CD14-positive monocyte (primary cell): ENCODE measurements at regions of chr22 and their contacts with region 1.

Region 1: GRCh38 chr22:38569972-38570778 is at the start of gene DMC1:
- DNase-seq: peak; percentile 35 to 54 (median 43)
- H3K4me3 ChIP-seq: peak within 1 kb of the TSS; percentile 1 to 72 (median 30)
- H3K4me3 Mint-ChIP-seq: peak within 1 kb of the TSS; percentile 77 to 93
- H3K27ac ChIP-seq: no peak within 1 kb of the TSS
- H3K27ac Mint-ChIP-seq: peak within 1 kb of the TSS in 4 of 7 donors; percentile 20 to 80 (median 46)
- H3K4me1 ChIP-seq: peaks cover 25 to 39% of the 10 kb centered on the region in 2 donors
- H3K4me1 Mint-ChIP-seq: peaks cover 37% of the 10 kb centered on the region
- H3K27me3 ChIP-seq: peaks cover 56 to 71% of the 10 kb centered on the region in 2 donors
- H3K27me3 Mint-ChIP-seq: peaks cover 66 to 77% (median 74%) of the 10 kb centered on the region in 3 donors
- CTCF ChIP-seq: no peak
- polyA plus RNA-seq, gene DMC1: not detected

Region 2: DNA sequence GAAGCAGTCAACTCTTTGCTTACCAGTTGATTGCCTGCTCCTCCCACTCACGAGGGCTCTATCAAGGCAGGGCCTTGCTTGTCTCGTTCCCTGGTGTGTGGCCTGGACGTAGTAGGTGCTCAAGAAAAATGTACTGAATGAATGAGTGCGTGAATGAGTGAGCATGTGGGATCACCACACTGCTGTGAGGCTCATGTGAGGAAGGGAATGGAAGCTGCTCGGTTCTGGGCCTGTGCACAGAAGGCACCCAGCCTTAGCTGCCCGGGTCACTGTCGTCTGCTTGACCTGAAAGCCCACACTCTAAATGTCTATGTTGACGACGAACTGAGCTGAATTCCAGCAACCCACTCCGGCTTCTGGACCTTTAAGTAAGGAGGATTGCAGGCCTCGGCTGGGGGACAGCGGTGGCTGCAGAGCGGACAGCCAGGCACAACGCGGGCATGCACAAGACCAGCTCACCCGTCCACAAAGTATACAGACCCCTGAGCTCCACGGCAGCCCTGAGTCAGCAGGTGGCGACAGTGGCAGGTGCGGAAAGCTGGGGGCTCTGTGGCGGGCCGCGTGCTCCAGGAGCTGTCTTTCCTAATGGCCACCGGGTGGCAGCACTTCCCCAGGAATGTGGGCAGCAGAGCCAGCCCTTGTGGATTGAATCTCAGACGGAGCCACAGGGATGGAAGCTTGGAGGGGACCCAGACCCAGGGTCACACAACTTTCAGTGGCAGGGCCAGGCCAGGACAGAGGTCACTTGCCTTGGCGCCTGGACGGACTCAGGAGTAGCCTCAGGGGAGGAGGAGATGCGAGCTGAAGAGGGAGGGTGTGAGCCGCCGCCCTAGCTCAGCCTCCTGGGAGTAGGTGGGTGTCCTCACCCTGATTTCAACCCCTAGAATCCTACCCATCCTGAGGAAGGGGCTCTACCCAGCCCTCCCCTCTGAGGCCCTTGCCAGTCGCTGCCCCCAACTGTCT is 518.0 kb before region 1 on chr22:
- intact Hi-C with region 1: loop called in 1 of 2 experiments (anchors 5 kb)
- DNase-seq: peak; percentile 60 to 75 (median 69)
- H3K4me3 ChIP-seq: no peak overlapping the region
- H3K4me3 Mint-ChIP-seq: no peak overlapping the region
- H3K27ac ChIP-seq: no peak overlapping the region
- H3K27ac Mint-ChIP-seq: no peak overlapping the region
- H3K4me1 ChIP-seq: peaks cover 9% of the 10 kb centered on the region in 2 donors
- H3K4me1 Mint-ChIP-seq: peaks cover 13% of the 10 kb centered on the region
- H3K27me3 ChIP-seq: peaks cover 0 to 3% of the 10 kb centered on the region in 2 donors
- H3K27me3 Mint-ChIP-seq: peaks cover 16 to 26% (median 19%) of the 10 kb centered on the region in 3 donors
- CTCF ChIP-seq: peak; percentile 94

Region 3: DNA sequence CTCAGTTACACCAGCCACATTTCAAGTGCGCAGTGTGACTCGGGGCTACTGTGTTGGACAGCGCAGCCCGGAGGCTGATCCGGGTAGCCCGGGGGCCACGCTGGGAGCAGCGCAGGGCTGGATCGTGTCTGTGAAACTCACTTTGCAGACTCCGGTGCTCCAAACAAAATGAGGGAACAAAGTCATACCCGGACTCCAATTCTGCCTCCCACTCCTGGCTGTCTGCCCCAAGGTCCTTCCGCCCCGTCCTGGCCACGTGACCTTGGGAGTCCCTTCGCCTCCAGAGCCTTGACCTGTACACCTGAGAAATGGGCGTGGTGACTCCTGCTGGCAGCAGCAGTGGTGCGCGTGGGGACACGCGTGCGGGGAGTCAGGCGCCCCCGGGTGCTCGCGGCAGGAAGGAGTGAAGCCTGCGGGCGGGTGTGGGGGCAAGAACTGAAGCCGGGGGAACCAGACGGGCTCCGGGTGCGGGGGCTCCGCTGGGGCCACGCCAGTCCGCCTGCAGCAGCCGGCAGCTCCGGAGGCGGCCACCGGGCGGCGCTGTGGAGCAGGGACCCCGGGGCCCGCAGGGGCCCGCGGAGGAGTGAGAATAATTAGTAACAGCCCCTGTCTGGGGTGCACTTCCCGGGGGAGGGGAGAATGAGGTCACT is 157.6 kb before region 1 on chr22:
- intact Hi-C with region 1: loop called (anchors 5 to 10 kb)
- DNase-seq: no peak
- H3K4me3 ChIP-seq: peak overlapping the region in 1 of 3 experiments; percentile 55
- H3K4me3 Mint-ChIP-seq: peak overlapping the region; percentile 43 to 88
- H3K27ac ChIP-seq: no peak overlapping the region
- H3K27ac Mint-ChIP-seq: no peak overlapping the region
- H3K4me1 ChIP-seq: peaks cover 21 to 33% of the 10 kb centered on the region in 2 donors
- H3K4me1 Mint-ChIP-seq: peaks cover 24% of the 10 kb centered on the region
- H3K27me3 ChIP-seq: peaks cover 0 to 3% of the 10 kb centered on the region in 2 donors
- H3K27me3 Mint-ChIP-seq: peaks cover 3 to 10% (median 4%) of the 10 kb centered on the region in 3 donors
- CTCF ChIP-seq: peak; percentile 96

Region 4: DNA sequence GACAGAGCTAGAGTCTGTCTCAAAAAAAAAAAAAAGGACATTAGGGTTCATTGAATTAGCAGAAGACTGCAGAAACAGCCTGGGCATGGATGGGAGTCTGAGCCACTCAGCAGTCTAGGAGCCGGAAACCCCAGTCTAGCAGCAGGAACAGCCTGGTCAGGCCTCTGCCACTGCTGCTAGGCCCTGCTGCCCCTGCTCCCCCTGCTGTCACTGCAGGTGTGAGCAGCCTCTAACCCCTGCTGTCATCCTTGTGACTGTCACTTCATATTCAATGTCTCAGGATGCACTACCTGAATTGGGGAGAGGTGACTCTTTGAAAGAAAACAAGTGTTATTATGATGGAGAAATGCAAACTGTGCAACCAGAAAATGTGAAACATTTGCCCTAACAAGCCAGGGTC is 57.1 kb before region 1 on chr22:
- intact Hi-C with region 1: loop called (anchors 5 kb)
- DNase-seq: peak in 1 of 3 donors; percentile 11
- H3K4me3 ChIP-seq: no peak overlapping the region
- H3K4me3 Mint-ChIP-seq: no peak overlapping the region
- H3K27ac ChIP-seq: no peak overlapping the region
- H3K27ac Mint-ChIP-seq: no peak overlapping the region
- H3K4me1 ChIP-seq: peaks cover 7 to 8% of the 10 kb centered on the region in 2 donors
- H3K4me1 Mint-ChIP-seq: peaks cover 11% of the 10 kb centered on the region
- H3K27me3 ChIP-seq: peaks cover 7 to 24% of the 10 kb centered on the region in 2 donors
- H3K27me3 Mint-ChIP-seq: peaks cover 27 to 58% (median 31%) of the 10 kb centered on the region in 3 donors
- CTCF ChIP-seq: no peak